Natural killer cell (primary cell): ENCODE measurements at regions of chr2 and their contacts with region 1.

Region 1: GRCh38 chr2:144505245-144505831 is 14.6 kb downstream of the ZEB2 start:
- DNase-seq: peak; percentile 69 to 76
- ATAC-seq: peak; percentile 49 to 73 (median 68)
- H3K4me3 ChIP-seq: no peak overlapping the region
- H3K4me3 Mint-ChIP-seq: peak overlapping the region; percentile 95
- H3K27ac ChIP-seq: peak overlapping the region; percentile 92
- H3K27ac Mint-ChIP-seq: no peak overlapping the region
- H3K4me1 ChIP-seq: peaks cover 43% of the 10 kb centered on the region
- H3K4me1 Mint-ChIP-seq: peaks cover 91 to 97% of the 10 kb centered on the region in 2 donors
- H3K27me3 ChIP-seq: no peaks in the 10 kb centered on the region
- H3K27me3 Mint-ChIP-seq: peaks cover 0 to 2% of the 10 kb centered on the region in 2 donors
- CTCF ChIP-seq: no peak

Region 2: DNA sequence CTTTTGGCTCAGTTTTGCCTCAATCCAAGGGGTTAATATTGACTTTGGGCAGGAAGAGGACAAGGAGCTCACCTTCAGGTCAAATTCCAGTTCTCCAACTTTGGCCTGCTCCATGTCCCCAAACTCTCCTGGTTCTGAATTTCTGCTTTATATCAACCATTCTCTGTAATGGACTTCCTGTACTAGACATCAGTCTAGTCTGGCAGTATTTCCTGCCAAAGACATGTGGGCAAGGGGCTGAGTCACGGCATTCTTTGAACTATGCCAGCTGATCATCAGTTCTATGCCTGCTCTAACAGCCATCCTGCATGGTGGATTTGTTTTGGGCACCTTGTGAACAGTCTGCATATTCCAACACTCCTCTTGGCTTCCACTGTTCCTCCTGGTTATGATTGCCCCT is 184.8 kb before region 1 on chr2:
- intact Hi-C with region 1: loop called (anchors 2 kb)
- DNase-seq: peak; percentile 28 to 80
- ATAC-seq: peak; percentile 75 to 87 (median 84)
- H3K4me3 ChIP-seq: no peak overlapping the region
- H3K4me3 Mint-ChIP-seq: peak overlapping the region; percentile 52
- H3K27ac ChIP-seq: peak overlapping the region; percentile 32
- H3K27ac Mint-ChIP-seq: peak overlapping the region; percentile 74 to 90
- H3K4me1 ChIP-seq: peaks cover 9% of the 10 kb centered on the region
- H3K4me1 Mint-ChIP-seq: peaks cover 38 to 48% of the 10 kb centered on the region in 2 donors
- H3K27me3 ChIP-seq: no peaks in the 10 kb centered on the region
- H3K27me3 Mint-ChIP-seq: no peaks in the 10 kb centered on the region
- CTCF ChIP-seq: no peak

Region 3: DNA sequence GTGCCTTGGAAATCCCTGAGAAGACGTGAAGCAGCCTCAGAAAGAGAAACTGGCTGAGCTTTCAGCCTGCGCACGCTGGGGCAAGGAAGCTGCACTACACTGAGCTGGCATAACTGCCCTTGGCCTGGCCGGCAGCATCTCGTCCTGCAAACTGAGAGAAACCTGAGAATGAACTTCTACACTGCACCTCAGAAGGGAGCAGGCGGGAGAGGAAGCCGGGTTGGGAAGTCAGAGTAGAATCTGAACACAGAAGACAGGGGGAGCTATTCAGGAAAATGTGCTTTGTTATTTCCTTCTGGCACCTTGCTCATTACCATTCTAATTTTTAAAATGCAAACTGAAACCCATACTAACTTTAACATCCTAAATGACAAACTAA is 56.3 kb before region 1 on chr2:
- intact Hi-C with region 1: loop called (anchors 2 kb)
- DNase-seq: peak in 1 of 2 donors; percentile 52
- ATAC-seq: peak; percentile 21 to 63 (median 36)
- H3K4me3 ChIP-seq: no peak overlapping the region
- H3K4me3 Mint-ChIP-seq: peak overlapping the region; percentile 65
- H3K27ac ChIP-seq: peak overlapping the region; percentile 70
- H3K27ac Mint-ChIP-seq: peak overlapping the region in 1 of 2 donors; percentile 86
- H3K4me1 ChIP-seq: peaks cover 27% of the 10 kb centered on the region
- H3K4me1 Mint-ChIP-seq: peaks cover 90 to 91% of the 10 kb centered on the region in 2 donors
- H3K27me3 ChIP-seq: no peaks in the 10 kb centered on the region
- H3K27me3 Mint-ChIP-seq: no peaks in the 10 kb centered on the region
- CTCF ChIP-seq: no peak

Region 4: DNA sequence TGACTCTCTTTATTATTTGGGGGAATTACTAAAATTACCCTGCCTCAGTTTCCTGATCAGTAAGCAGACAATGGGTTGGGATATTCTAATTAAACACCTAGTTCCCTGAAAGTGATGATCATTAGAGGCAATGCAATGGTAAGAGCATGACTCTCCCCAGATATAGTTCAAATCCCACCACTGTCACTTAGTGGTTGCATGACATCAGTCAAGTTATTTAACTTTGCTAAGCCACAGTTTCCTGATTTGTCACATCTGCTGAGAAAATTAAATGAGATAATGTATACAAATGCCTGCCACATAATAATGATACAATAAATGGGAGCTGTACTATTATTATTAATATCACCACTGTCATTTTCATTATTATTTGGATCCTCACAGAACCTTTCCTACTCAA is 15.3 kb before region 1 on chr2:
- intact Hi-C with region 1: loop called (anchors 2 kb)
- DNase-seq: peak in 1 of 2 donors; percentile 58
- ATAC-seq: peak; percentile 62 to 74 (median 71)
- H3K4me3 ChIP-seq: no peak overlapping the region
- H3K4me3 Mint-ChIP-seq: peak overlapping the region; percentile 73
- H3K27ac ChIP-seq: peak overlapping the region; percentile 52
- H3K27ac Mint-ChIP-seq: peak overlapping the region; percentile 58 to 89
- H3K4me1 ChIP-seq: peaks cover 26% of the 10 kb centered on the region
- H3K4me1 Mint-ChIP-seq: peaks cover 78 to 82% of the 10 kb centered on the region in 2 donors
- H3K27me3 ChIP-seq: no peaks in the 10 kb centered on the region
- H3K27me3 Mint-ChIP-seq: no peaks in the 10 kb centered on the region
- CTCF ChIP-seq: no peak